ENCODE measurements at regions of chr19 and their contacts with region 1.

Region 1: GRCh38 chr19:49817964-49818648 is at the start of gene MED25:
- DNase-seq: peak; percentile 78 to 96 (median 86)
- ATAC-seq: peak; percentile 60
- H3K4me3 ChIP-seq: peak within 1 kb of the TSS; percentile 66
- H3K4me3 Mint-ChIP-seq: peak within 1 kb of the TSS; percentile 99
- H3K27ac ChIP-seq: peak within 1 kb of the TSS; percentile 96 to 97
- H3K27ac Mint-ChIP-seq: peak within 1 kb of the TSS; percentile 99
- H3K4me1 ChIP-seq: peaks cover 34% of the 10 kb centered on the region
- H3K4me1 Mint-ChIP-seq: peaks cover 35% of the 10 kb centered on the region
- H3K27me3 ChIP-seq: no peaks in the 10 kb centered on the region
- H3K27me3 Mint-ChIP-seq: no peaks in the 10 kb centered on the region
- CTCF ChIP-seq: peak; percentile 38
- total RNA-seq, gene MED25: 67.2 to 67.8 TPM

Region 2: GRCh38 chr19:49599378-49600295 is 218.5 kb before region 1 on chr19:
- CTCF ChIA-PET with region 1: no interaction called
- POLR2A ChIA-PET with region 1: no interaction called
- intact Hi-C with region 1: no loop called
- DNase-seq: no peak
- ATAC-seq: no peak
- H3K4me3 ChIP-seq: no peak overlapping the region
- H3K4me3 Mint-ChIP-seq: no peak overlapping the region
- H3K27ac ChIP-seq: no peak overlapping the region
- H3K27ac Mint-ChIP-seq: peak overlapping the region; percentile 53
- H3K4me1 ChIP-seq: peaks cover 15% of the 10 kb centered on the region
- H3K4me1 Mint-ChIP-seq: peaks cover 16% of the 10 kb centered on the region
- H3K27me3 ChIP-seq: no peaks in the 10 kb centered on the region
- H3K27me3 Mint-ChIP-seq: no peaks in the 10 kb centered on the region
- CTCF ChIP-seq: no peak

Region 3: GRCh38 chr19:49718511-49718910 is 99.6 kb before region 1 on chr19:
- CTCF ChIA-PET with region 1: interaction called, 8 read pairs
- POLR2A ChIA-PET with region 1: interaction called, 13 read pairs
- intact Hi-C with region 1: no loop called
- DNase-seq: no peak
- ATAC-seq: no peak
- H3K4me3 ChIP-seq: no peak overlapping the region
- H3K4me3 Mint-ChIP-seq: peak overlapping the region; percentile 58
- H3K27ac ChIP-seq: no peak overlapping the region
- H3K27ac Mint-ChIP-seq: peak overlapping the region; percentile 79
- H3K4me1 ChIP-seq: peaks cover 13% of the 10 kb centered on the region
- H3K4me1 Mint-ChIP-seq: peaks cover 13% of the 10 kb centered on the region
- H3K27me3 ChIP-seq: no peaks in the 10 kb centered on the region
- H3K27me3 Mint-ChIP-seq: no peaks in the 10 kb centered on the region
- CTCF ChIP-seq: no peak

Region 4: GRCh38 chr19:49766007-49766937 is 51.8 kb before region 1 on chr19:
- CTCF ChIA-PET with region 1: no interaction called
- POLR2A ChIA-PET with region 1: interaction called, 17 read pairs
- intact Hi-C with region 1: loop called (anchors 1 to 5 kb)
- DNase-seq: peak; percentile 98 to 100 (median 99)
- ATAC-seq: peak; percentile 86
- H3K4me3 ChIP-seq: peak overlapping the region; percentile 91
- H3K4me3 Mint-ChIP-seq: peak overlapping the region; percentile 94
- H3K27ac ChIP-seq: peak overlapping the region in 1 of 2 donors; percentile 84
- H3K27ac Mint-ChIP-seq: peak overlapping the region; percentile 76
- H3K4me1 ChIP-seq: peaks cover 32% of the 10 kb centered on the region
- H3K4me1 Mint-ChIP-seq: peaks cover 45% of the 10 kb centered on the region
- H3K27me3 ChIP-seq: no peaks in the 10 kb centered on the region
- H3K27me3 Mint-ChIP-seq: no peaks in the 10 kb centered on the region
- CTCF ChIP-seq: no peak

Region 5: GRCh38 chr19:49850473-49851342 is 32.6 kb after region 1 on chr19 and contains the start of gene PTOV1:
- CTCF ChIA-PET with region 1: interaction called, 5 read pairs
- POLR2A ChIA-PET with region 1: interaction called, 24 read pairs
- intact Hi-C with region 1: loop called (anchors 1 to 5 kb)
- DNase-seq: peak; percentile 77 to 95 (median 84)
- ATAC-seq: peak; percentile 87
- H3K4me3 ChIP-seq: peak within 1 kb of the TSS; percentile 84
- H3K4me3 Mint-ChIP-seq: peak within 1 kb of the TSS; percentile 98
- H3K27ac ChIP-seq: peak within 1 kb of the TSS; percentile 94 to 95
- H3K27ac Mint-ChIP-seq: peak within 1 kb of the TSS; percentile 94
- H3K4me1 ChIP-seq: peaks cover 54% of the 10 kb centered on the region
- H3K4me1 Mint-ChIP-seq: peaks cover 35% of the 10 kb centered on the region
- H3K27me3 ChIP-seq: no peaks in the 10 kb centered on the region
- H3K27me3 Mint-ChIP-seq: no peaks in the 10 kb centered on the region
- CTCF ChIP-seq: no peak
- total RNA-seq, gene PTOV1: 127 to 134 TPM

Region 6: GRCh38 chr19:49869441-49870176 is 51.5 kb after region 1 on chr19:
- CTCF ChIA-PET with region 1: no interaction called
- POLR2A ChIA-PET with region 1: interaction called, 14 read pairs
- intact Hi-C with region 1: loop called (anchors 2 kb)
- DNase-seq: peak; percentile 78 to 98 (median 86)
- ATAC-seq: peak; percentile 77
- H3K4me3 ChIP-seq: peak overlapping the region; percentile 61
- H3K4me3 Mint-ChIP-seq: peak overlapping the region; percentile 78
- H3K27ac ChIP-seq: peak overlapping the region; percentile 68 to 76
- H3K27ac Mint-ChIP-seq: no peak overlapping the region
- H3K4me1 ChIP-seq: peaks cover 67% of the 10 kb centered on the region
- H3K4me1 Mint-ChIP-seq: peaks cover 35% of the 10 kb centered on the region
- H3K27me3 ChIP-seq: no peaks in the 10 kb centered on the region
- H3K27me3 Mint-ChIP-seq: no peaks in the 10 kb centered on the region
- CTCF ChIP-seq: no peak

Region 7: GRCh38 chr19:49877020-49877878 is 59.1 kb after region 1 on chr19 and contains the starts of genes AKT1S1 and TBC1D17:
- CTCF ChIA-PET with region 1: no interaction called
- POLR2A ChIA-PET with region 1: interaction called, 18 read pairs
- intact Hi-C with region 1: loop called (anchors 1 kb)
- DNase-seq: peak; percentile 95 to 100 (median 98)
- ATAC-seq: peak; percentile 60
- H3K4me3 ChIP-seq: peak within 1 kb of the TSS; percentile 88
- H3K4me3 Mint-ChIP-seq: no peak within 1 kb of the TSS
- H3K27ac ChIP-seq: peak within 1 kb of the TSS; percentile 98 to 100
- H3K27ac Mint-ChIP-seq: no peak within 1 kb of the TSS
- H3K4me1 ChIP-seq: peaks cover 35% of the 10 kb centered on the region
- H3K4me1 Mint-ChIP-seq: peaks cover 18% of the 10 kb centered on the region
- H3K27me3 ChIP-seq: no peaks in the 10 kb centered on the region
- H3K27me3 Mint-ChIP-seq: no peaks in the 10 kb centered on the region
- CTCF ChIP-seq: no peak
- total RNA-seq, gene AKT1S1: 15.1 to 15.8 TPM
- total RNA-seq, gene TBC1D17: 35.5 to 35.8 TPM

Measured in CD4-positive, alpha-beta T cell (primary cell).